Posterior vena cava (tissue), 2 donors: ENCODE measurements at regions of chr6 and their contacts with region 1.

Region 1: DNA sequence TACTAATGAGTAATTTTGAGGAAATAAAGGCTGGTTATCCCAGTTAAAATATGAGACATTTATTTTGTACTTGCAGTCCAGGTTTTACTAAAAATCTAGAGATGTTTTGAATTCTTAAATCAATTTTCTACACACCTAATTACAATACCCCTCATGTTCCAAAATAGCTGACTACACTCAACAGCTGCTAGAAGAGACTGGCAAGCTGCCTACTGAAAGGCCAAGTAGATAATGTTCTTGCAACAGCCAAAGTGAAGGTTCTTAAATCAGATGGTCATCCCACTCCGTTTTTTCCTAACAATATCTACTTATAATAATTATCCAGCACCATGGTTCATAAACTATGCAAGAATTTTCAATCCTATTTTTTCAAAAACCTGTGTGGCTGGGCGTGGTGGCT is 69.0 kb downstream of the DTNBP1 start:
- DNase-seq: no peak

Region 2: DNA sequence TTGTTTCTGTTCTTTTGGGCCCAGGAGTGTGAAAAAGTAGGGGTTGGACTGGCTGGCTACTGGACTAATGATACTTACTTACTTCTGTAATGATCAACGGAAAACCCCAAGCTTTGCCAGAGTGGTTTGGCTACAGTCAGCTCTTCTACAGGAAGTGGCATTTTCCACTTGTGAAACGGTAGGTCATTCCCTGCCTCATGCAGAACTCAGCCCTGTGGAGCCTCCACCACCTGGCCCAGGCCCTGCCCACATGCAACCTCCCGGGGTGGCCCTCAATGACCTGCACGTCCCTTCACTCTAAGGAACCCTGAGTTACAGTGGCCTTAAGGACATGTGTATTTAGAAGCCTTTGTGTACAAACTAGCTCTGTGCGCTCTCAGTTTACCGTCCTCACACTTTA is 71.4 kb before region 1 on chr6:
- intact Hi-C with region 1: loop called in 1 of 2 experiments (anchors 1 kb)
- DNase-seq: no peak

Region 3: GRCh38 chr6:15569035-15569995 is 24.5 kb before region 1 on chr6:
- intact Hi-C with region 1: no loop called
- DNase-seq: no peak